ENCODE measurements at regions of chr14 and their contacts with region 1.

Region 1: GRCh38 chr14:67934862-67935261 is 115.3 kb downstream of the RAD51B start:
- DNase-seq: no peak
- ATAC-seq: no peak
- H3K4me3 ChIP-seq: no peak overlapping the region
- H3K27ac ChIP-seq: no peak overlapping the region
- H3K4me1 ChIP-seq: peaks cover 6% of the 10 kb centered on the region
- H3K27me3 ChIP-seq: no peaks in the 10 kb centered on the region
- CTCF ChIP-seq: no peak
- POLR2A ChIP-seq: no peak

Region 2: DNA sequence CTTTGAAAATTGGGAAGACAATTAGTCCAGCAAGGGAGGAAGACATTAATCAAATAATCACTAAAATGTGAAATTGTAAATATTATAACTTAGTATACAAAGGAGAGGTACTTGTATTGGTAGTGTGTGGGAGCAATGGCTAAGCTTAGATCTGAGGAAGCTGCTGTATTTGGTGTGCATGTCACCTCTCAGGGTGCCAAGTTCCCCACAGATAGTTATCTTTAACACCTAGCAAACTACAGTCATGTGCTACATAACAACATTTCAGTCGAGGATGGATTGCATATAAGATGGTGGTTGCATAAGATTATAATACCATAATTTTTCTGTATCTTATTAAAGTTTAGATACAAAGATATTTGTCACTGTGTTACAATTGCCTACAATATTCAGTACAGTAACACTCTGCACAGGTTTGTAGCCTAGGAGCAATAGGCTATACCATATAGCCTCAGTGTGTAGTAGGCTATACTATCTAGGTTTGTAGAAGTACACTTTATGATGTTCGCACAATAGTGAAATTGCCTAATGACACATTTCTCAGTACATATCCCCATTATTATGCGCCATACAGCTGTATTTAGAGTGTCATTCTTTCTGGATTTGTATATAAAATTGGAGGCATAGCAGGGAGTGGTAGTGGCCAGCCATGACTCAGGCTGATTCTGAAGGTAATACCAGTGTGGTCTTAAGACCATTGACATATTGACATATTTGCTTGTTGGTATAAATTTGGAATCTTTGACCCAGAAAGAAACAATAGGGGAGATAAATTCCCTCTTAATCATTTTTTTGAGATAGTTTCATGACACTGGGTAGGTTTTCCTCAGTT is 59.5 kb before region 1 on chr14:
- intact Hi-C with region 1: no loop called
- DNase-seq: no peak
- ATAC-seq: no peak
- H3K4me3 ChIP-seq: no peak overlapping the region
- H3K27ac ChIP-seq: no peak overlapping the region
- H3K4me1 ChIP-seq: no peaks in the 10 kb centered on the region
- H3K27me3 ChIP-seq: no peaks in the 10 kb centered on the region
- CTCF ChIP-seq: no peak
- POLR2A ChIP-seq: no peak

Region 3: GRCh38 chr14:68122651-68123050 is 187.8 kb after region 1 on chr14:
- intact Hi-C with region 1: no loop called
- DNase-seq: no peak
- ATAC-seq: no peak
- H3K4me3 ChIP-seq: no peak overlapping the region
- H3K27ac ChIP-seq: no peak overlapping the region
- H3K4me1 ChIP-seq: peaks cover 10% of the 10 kb centered on the region
- H3K27me3 ChIP-seq: no peaks in the 10 kb centered on the region
- CTCF ChIP-seq: no peak
- POLR2A ChIP-seq: no peak

Region 4: DNA sequence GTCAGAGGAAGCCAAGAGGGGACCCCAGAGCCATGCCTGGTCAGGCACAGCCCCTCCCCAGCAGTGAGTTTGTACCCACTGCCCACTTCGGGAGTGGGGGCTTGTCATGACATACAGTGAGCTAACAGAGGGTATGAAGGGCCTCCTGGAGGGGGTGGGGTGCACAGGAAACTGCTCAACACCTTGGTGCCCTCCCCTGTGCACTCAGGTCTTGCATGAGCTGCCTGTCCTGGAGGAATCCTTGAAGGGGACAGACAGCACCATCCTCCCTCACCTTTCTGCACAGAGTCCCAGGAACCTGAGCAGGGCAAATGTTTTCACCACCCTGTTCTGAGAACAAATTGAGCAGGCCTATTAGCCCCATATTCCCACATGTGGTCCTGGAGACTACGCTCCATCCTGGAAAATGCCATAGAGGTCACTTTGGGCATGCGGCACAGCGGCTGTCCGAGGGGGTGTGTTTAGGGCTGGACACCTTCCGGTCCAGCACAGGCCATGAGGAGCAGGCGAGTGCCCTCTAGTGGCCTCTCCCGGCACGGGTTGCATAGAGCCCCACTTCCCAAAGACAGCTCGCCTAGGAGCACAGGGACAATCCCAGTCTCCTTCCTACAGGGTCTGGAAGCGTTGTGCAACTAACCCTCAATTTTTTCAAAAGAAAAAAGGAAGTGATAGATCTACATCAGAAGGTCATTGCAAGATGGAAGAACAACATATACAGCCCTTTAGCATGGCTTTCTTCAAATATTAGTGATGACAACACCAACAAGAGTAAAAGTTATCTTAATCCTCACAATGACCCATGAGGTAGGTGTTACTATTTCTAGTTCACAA is 889.9 kb after region 1 on chr14:
- intact Hi-C with region 1: loop called (anchors 5 kb)
- DNase-seq: peak; percentile 89 to 94 (median 91)
- ATAC-seq: peak; percentile 93
- H3K4me3 ChIP-seq: no peak overlapping the region
- H3K27ac ChIP-seq: no peak overlapping the region
- H3K4me1 ChIP-seq: peaks cover 20% of the 10 kb centered on the region
- H3K27me3 ChIP-seq: no peaks in the 10 kb centered on the region
- CTCF ChIP-seq: peak; percentile 62 to 90 (median 88)
- POLR2A ChIP-seq: no peak